ENCODE measurements at regions of chr17 and their contacts with region 1.

Region 1: GRCh38 chr17:58531661-58532554 is 17.5 kb upstream of the MTMR4 start:
- DNase-seq: no peak
- ATAC-seq: peak; percentile 57 to 76
- H3K4me3 ChIP-seq: peak overlapping the region; percentile 61 to 92 (median 66)
- H3K27ac ChIP-seq: peak overlapping the region in 3 of 4 donors; percentile 28 to 60 (median 41)
- H3K4me1 ChIP-seq: peaks cover 6 to 7% of the 10 kb centered on the region in 2 donors
- H3K27me3 ChIP-seq: no peaks in the 10 kb centered on the region
- CTCF ChIP-seq: no peak
- POLR2A ChIP-seq: peak in 1 of 2 donors; percentile 17

Region 2: DNA sequence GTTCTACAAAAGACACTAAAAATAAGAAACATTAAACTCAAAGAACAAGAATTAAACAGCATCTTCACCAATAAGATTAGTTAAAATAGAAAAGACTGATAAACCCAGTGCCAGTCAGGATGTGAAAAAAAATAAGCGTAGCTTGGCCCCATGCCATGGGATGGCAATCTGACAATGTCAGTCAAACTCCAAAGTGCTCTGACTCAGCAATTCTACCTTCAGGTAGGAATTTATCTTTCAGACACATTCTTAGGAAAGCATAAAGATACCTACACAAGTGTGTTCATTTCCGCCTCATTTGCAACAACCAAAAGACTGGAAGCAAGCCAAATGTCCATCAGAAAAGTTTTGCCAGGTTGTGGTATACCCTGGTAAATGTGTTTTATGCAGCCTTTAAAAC is 242.0 kb before region 1 on chr17:
- in situ Hi-C with region 1: no loop called
- intact Hi-C with region 1: no loop called
- DNase-seq: no peak
- ATAC-seq: no peak
- H3K4me3 ChIP-seq: no peak overlapping the region
- H3K27ac ChIP-seq: no peak overlapping the region
- H3K4me1 ChIP-seq: no peaks in the 10 kb centered on the region
- H3K27me3 ChIP-seq: peaks cover 0 to 6% (median 4%) of the 10 kb centered on the region in 3 donors
- CTCF ChIP-seq: no peak
- POLR2A ChIP-seq: no peak

Region 3: GRCh38 chr17:58692239-58693055 is 160.5 kb after region 1 on chr17 and contains the start of gene RAD51C:
- in situ Hi-C with region 1: loop called in 1 of 4 experiments (anchors 10 kb)
- intact Hi-C with region 1: loop called (anchors 5 kb)
- DNase-seq: peak; percentile 53 to 67
- ATAC-seq: peak; percentile 91 to 95
- H3K4me3 ChIP-seq: peak within 1 kb of the TSS; percentile 65 to 80 (median 79)
- H3K27ac ChIP-seq: peak within 1 kb of the TSS; percentile 74 to 79 (median 76)
- H3K4me1 ChIP-seq: peaks cover 10 to 12% of the 10 kb centered on the region in 2 donors
- H3K27me3 ChIP-seq: no peaks in the 10 kb centered on the region
- CTCF ChIP-seq: no peak
- POLR2A ChIP-seq: peak; percentile 38 to 39
- total RNA-seq, gene RAD51C: 6.4 to 18.7 (median 12.5) TPM

Measured in gastrocnemius medialis (tissue), 4 donors.